ENCODE measurements at regions of chr12 and their contacts with region 1.

Region 1: DNA sequence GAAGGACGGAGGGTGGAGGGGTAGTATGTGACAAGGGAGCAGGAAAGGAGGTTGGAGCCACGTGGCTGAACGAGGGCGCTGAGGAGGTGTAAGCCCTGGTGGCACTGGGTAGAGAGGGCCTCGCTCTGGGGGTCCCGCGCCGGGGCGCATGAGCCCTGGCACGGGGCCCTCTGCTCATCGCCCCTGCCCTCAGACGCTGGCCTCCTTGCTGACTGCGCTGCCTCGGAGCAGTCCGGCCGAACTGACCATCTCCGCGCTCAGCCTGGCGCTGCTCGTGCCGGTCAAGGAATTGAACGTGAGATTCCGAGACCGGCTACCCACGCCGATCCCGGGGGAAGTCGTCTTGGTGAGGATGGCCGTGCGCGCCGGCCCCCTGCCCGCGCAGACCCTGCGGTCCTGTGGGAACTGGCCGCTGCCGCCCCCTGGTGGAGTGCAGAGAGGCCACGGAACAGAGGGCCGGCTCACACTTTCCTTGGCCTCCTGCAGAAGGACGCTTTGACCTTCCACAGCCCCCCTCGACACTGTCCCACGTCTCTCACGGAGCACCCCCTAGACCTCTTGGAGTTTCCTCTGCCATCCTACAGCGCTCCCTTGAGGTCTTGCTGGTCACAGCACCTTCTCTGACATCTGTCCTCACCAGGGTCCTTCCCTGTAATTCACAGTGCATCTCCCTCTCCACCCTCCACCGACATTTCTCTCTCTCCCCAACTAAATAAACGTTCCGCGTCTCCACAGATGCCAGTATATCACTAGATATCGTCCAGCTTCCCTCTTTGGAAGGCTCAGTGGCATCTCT is 10.5 kb downstream of the ARHGEF25 start:
- DNase-seq: peak; percentile 35
- H3K4me3 Mint-ChIP-seq: peak overlapping the region; percentile 47
- H3K27ac Mint-ChIP-seq: no peak overlapping the region
- H3K4me1 Mint-ChIP-seq: peaks cover 5% of the 10 kb centered on the region
- H3K27me3 Mint-ChIP-seq: peaks cover 69% of the 10 kb centered on the region
- CTCF ChIP-seq: peak; percentile 90

Region 2: GRCh38 chr12:57224973-57225679 is 396.6 kb before region 1 on chr12:
- CTCF ChIA-PET with region 1: no interaction called
- POLR2A ChIA-PET with region 1: no interaction called
- intact Hi-C with region 1: no loop called
- DNase-seq: no peak
- H3K4me3 Mint-ChIP-seq: no peak overlapping the region
- H3K27ac Mint-ChIP-seq: no peak overlapping the region
- H3K4me1 Mint-ChIP-seq: peaks cover 12% of the 10 kb centered on the region
- H3K27me3 Mint-ChIP-seq: peaks cover 24% of the 10 kb centered on the region
- CTCF ChIP-seq: peak; percentile 19

Region 3: GRCh38 chr12:57604454-57604991 is 17.2 kb before region 1 on chr12 and contains the start of gene DTX3:
- CTCF ChIA-PET with region 1: interaction called, 10 read pairs
- POLR2A ChIA-PET with region 1: interaction called, 5 read pairs
- intact Hi-C with region 1: no loop called
- DNase-seq: no peak
- H3K4me3 Mint-ChIP-seq: peak within 1 kb of the TSS; percentile 64
- H3K27ac Mint-ChIP-seq: no peak within 1 kb of the TSS
- H3K4me1 Mint-ChIP-seq: peaks cover 13% of the 10 kb centered on the region
- H3K27me3 Mint-ChIP-seq: no peaks in the 10 kb centered on the region
- CTCF ChIP-seq: no peak
- total RNA-seq, gene DTX3: 1.7 and 2.0 TPM in 2 replicates

Region 4: DNA sequence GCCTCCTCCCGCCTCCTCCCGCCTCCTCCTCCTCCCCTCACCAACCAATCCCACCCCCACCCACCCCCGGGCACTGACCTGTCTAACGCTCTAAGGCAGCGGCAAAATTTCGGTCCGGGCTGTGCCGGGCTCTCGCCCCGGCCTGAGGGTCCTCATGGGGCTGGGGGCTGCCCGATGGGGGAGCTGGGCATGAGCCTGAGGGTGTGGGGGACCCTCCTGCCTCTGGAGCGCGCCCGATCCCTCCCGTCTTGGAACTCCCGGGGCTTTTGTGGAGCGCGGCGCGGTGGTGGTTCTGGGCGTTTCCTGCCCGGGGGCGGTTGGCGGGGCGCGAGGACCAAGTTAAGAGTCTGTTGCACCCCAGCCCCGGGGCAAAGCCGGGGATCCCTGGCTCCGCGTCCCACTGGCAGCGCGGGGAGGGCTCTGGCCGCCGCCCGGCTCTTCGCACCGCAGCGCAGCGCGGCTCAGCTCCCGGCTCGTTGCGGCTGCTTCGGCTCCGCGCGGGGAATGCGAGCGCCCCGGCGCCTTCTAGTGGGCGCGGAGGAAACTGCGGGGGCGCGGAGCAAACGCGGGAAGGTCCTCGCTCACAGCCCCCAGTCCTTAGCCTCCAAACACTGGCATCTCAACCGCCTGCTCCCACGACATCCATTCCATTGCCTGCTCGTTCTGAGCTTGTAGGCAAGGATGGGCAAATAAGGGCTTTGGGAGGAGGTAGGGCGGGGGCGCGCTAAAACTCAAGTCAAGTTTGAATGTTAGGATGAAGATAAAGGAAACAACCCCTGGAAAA is 11.2 kb after region 1 on chr12 and contains the start of gene B4GALNT1:
- CTCF ChIA-PET with region 1: interaction called, 18 read pairs
- POLR2A ChIA-PET with region 1: no interaction called
- intact Hi-C with region 1: no loop called
- DNase-seq: peak; percentile 58
- H3K4me3 Mint-ChIP-seq: peak within 1 kb of the TSS; percentile 52
- H3K27ac Mint-ChIP-seq: no peak within 1 kb of the TSS
- H3K4me1 Mint-ChIP-seq: peaks cover 5% of the 10 kb centered on the region
- H3K27me3 Mint-ChIP-seq: no peaks in the 10 kb centered on the region
- CTCF ChIP-seq: peak; percentile 84
- total RNA-seq, gene B4GALNT1: 0.29 and 0.40 TPM in 2 replicates